ENCODE measurements at regions of chr4 and their contacts with region 1.

Region 1: GRCh38 chr4:139740531-139741041 is 75.0 kb downstream of the MGST2 start:
- DNase-seq: peak; percentile 77
- ATAC-seq: peak; percentile 94

Region 2: DNA sequence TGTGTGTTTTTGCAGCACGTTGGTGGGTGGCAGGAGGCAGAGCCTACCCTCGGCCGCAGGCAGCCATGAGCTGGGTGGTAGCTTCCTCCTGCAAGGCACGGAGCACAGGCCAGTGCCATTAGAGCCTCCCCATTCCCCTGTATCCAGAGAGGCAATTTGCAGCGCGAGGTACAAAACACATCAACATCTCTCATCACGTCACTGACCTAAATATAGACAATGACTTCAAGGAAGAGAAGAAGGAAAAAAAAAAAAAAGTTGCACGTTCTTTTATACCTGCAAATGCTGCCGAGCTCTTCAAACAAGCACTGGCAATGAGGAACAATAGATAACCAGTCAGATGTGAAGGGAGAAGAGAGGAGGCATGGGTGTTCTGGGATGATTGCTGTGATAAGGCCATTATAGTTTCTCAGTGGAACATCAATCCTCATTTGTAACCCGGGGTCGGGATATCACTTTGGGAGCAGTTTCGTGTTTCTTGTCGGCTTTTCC is 85.0 kb after region 1 on chr4:
- intact Hi-C with region 1: loop called (anchors 10 kb)
- DNase-seq: no peak
- ATAC-seq: peak; percentile 78